Sigmoid colon (tissue), 7 donors: ENCODE measurements at regions of chr6 and their contacts with region 1.

Region 1: GRCh38 chr6:122740936-122741335 is 38.6 kb upstream of the FABP7 start:
- DNase-seq: no peak
- H3K4me3 ChIP-seq: no peak overlapping the region
- H3K27ac ChIP-seq: no peak overlapping the region
- H3K4me1 ChIP-seq: no peaks in the 10 kb centered on the region
- H3K27me3 ChIP-seq: no peaks in the 10 kb centered on the region
- CTCF ChIP-seq: no peak
- EP300 ChIP-seq: no peak
- POLR2A ChIP-seq: no peak

Region 2: GRCh38 chr6:122789182-122790027 is 48.5 kb after region 1 on chr6 and contains the start of gene SMPDL3A:
- intact Hi-C with region 1: loop called (anchors 5 kb)
- DNase-seq: peak; percentile 89
- H3K4me3 ChIP-seq: peak within 1 kb of the TSS; percentile 74 to 80 (median 74)
- H3K27ac ChIP-seq: peak within 1 kb of the TSS; percentile 92 to 98 (median 94)
- H3K4me1 ChIP-seq: peaks cover 0 to 24% (median 17%) of the 10 kb centered on the region in 4 donors
- H3K27me3 ChIP-seq: no peaks in the 10 kb centered on the region
- CTCF ChIP-seq: peak in 3 of 4 experiments; percentile 11 to 49 (median 28)
- EP300 ChIP-seq: no peak
- POLR2A ChIP-seq: no peak
- total RNA-seq, gene SMPDL3A: 6.4 to 11.9 (median 10.1) TPM